ENCODE measurements at regions of chr9 and their contacts with region 1.

Region 1: DNA sequence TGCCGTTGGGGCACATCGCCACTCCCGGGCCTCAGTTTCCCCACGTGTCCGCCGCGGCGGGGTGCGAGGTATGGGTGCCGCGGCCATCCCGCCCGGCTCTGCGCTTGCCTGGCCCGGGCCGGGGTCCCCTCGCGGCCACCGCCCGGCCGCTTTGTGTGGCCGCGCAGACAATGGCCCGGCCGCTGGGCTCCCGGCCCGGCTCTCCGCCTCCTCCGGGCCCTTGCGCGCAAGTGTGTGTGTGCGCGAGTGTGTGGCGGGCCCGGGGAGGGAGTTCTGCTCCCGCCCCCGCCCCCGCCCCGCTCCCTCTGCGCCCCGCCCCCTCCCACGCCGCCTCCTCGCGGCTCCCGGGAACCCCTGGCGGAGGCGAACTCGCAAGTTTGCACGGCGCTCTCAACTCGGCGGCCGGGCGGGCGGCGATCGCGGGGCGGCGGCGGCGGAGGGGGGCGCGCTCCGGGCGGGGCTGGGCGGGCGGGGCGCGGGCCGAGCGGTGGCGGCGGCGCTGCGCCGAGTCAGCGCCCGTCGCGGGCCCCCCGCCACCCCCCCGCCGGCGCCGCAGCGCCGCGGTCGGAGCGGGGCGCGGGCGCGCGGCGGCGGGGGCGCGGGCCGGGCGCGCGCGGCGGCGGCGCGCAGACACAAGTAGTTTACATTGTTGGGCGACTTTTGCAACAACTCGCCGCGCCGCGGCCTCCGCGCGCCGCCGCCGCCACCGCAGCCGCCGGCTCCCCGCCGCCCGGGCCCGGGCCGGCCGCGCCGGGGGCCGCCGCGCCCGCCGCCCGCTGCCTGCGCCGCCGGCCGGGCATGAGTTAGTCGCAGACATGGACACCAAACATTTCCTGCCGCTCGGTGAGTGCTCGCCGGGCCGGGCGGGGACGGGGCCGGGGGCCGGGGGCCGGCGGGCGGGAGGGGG is at the start of gene RXRA:
- DNase-seq: no peak
- H3K4me3 ChIP-seq: peak within 1 kb of the TSS; percentile 77 to 96
- H3K27ac ChIP-seq: peak within 1 kb of the TSS; percentile 98
- H3K4me1 ChIP-seq: peaks cover 58% of the 10 kb centered on the region
- H3K27me3 ChIP-seq: no peaks in the 10 kb centered on the region
- CTCF ChIP-seq: no peak
- POLR2A ChIP-seq: peak in 1 of 2 donors; percentile 88
- total RNA-seq, gene RXRA: 49.4 TPM

Region 2: DNA sequence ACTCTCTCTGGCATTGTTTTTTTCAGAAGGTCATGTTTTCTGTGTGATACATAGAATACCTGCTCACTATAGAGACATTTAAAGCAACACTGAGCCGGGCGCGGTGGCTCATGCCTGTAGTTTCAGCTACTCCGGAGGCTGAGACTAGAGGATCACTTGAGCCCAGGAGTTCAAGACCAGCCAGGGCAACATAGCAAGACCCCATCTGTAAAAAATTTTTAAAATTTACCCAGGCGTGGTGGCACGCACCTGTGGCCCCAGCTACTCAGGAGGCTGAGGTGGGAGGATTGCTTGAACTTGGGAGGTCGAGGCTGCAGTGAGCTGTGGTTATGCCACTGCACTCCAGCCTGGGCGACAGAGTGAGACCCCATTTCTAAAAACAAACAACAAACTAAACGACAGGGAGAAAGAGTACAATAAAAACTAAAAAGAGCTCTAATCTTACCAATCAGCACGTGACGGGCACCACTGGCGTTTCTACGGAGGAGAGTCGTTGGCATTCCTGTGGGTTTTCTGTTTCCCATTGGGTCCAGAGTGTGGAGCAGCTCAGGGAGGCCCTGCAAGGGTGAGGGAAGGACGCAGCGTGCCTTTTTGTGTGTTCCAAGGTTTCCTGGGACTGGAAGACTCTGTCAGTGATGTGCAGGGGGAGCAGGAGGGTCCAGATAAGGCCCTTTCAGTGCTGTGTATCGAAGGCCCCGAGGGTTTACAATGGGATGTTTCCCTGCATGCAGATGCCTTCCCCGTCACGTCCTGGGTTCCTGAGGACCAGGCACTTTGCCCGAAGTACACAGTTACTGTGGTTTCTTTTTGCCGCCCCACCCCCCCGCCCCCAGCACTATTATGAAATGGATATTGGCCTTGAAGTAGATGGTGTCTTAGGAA is 154.5 kb before region 1 on chr9:
- intact Hi-C with region 1: loop called (anchors 5 kb)
- DNase-seq: no peak
- H3K4me3 ChIP-seq: no peak overlapping the region
- H3K27ac ChIP-seq: no peak overlapping the region
- H3K4me1 ChIP-seq: peaks cover 33% of the 10 kb centered on the region
- H3K27me3 ChIP-seq: no peaks in the 10 kb centered on the region
- CTCF ChIP-seq: no peak
- POLR2A ChIP-seq: no peak

Region 3: GRCh38 chr9:134434894-134435506 is 108.9 kb after region 1 on chr9:
- intact Hi-C with region 1: loop called (anchors 5 kb)
- DNase-seq: peak in 1 of 2 donors; percentile 96
- H3K4me3 ChIP-seq: peak overlapping the region in 1 of 2 donors; percentile 11
- H3K27ac ChIP-seq: peak overlapping the region; percentile 96
- H3K4me1 ChIP-seq: peaks cover 83% of the 10 kb centered on the region
- H3K27me3 ChIP-seq: no peaks in the 10 kb centered on the region
- CTCF ChIP-seq: no peak
- POLR2A ChIP-seq: no peak